ENCODE measurements at regions of chr17 and their contacts with region 1.

Region 1: GRCh38 chr17:41548844-41549595 is 20.9 kb upstream of the KRT19 start:
- DNase-seq: peak; percentile 92
- H3K4me3 ChIP-seq: peak overlapping the region; percentile 21 to 25; a peak in 2 of 4 replicates
- H3K27ac ChIP-seq: peak overlapping the region; percentile 85 to 86
- H3K4me1 ChIP-seq: peaks cover 17 to 30% of the 10 kb centered on the region in 2 experiments; a peak in 3 of 4 replicates
- H3K27me3 ChIP-seq: no peaks in the 10 kb centered on the region
- CTCF ChIP-seq: peak; percentile 94
- EP300 ChIP-seq: peak in 1 of 2 experiments; percentile 6; a peak in 2 of 4 replicates
- RAD21 ChIP-seq: peak; percentile 92

Region 2: DNA sequence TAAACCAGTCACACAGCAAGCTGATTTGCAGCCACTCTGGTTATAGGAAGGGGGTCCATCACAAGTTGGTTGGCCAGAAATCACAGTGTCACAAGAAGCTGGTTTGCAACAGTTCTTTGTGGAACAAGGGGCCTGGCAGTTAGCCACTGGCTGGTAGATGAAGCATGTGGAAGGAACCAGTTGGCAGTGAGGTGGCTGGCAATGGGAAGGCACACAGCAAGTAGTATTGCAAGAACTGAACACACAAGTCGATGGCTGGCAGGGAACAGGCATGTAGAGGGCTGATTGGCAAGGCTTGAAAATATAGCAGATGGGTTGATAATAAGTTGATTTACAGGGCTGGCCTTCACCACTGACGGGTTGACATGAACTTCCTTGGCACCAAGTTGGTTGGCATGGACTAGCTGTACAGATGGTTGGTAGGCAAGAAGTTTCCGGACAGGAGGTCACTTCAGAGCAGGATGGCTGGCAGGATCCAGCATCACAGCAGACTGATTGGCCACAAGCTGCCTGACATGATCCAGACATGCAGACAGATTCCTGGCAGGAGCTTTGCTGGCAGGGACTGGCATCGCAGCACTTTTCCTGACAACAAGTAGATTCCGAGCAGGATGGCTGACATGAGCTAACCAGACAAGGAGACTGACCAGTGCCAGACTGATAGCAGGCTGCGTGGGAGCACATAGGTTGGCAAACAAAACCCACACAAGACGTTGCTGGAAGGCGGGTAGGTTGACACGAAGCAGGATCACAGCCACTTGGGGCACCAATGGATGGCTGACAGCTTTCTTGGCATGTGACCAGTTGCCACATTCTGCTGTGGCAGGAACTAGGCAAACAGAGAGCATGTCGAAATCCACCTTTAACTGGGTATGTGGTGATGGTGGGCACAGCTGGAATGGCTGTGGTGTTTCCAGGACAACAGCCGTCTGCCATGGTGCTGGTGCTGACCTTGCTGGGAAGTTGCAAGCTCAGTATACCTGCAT is 246.8 kb before region 1 on chr17 and contains the start of gene KRTAP29-1:
- CTCF ChIA-PET with region 1: interaction called, 17 read pairs
- POLR2A ChIA-PET with region 1: no interaction called
- DNase-seq: no peak
- H3K4me3 ChIP-seq: no peak within 1 kb of the TSS
- H3K27ac ChIP-seq: no peak within 1 kb of the TSS
- H3K4me1 ChIP-seq: peaks cover 0 to 12% of the 10 kb centered on the region in 2 experiments; a peak in 1 of 4 replicates
- H3K27me3 ChIP-seq: peaks cover 55% of the 10 kb centered on the region; the same call in 1 of the 2 replicates
- CTCF ChIP-seq: no peak
- EP300 ChIP-seq: no peak
- RAD21 ChIP-seq: no peak
- polyA plus RNA-seq, gene KRTAP29-1: not detected in 2 replicates

Region 3: DNA sequence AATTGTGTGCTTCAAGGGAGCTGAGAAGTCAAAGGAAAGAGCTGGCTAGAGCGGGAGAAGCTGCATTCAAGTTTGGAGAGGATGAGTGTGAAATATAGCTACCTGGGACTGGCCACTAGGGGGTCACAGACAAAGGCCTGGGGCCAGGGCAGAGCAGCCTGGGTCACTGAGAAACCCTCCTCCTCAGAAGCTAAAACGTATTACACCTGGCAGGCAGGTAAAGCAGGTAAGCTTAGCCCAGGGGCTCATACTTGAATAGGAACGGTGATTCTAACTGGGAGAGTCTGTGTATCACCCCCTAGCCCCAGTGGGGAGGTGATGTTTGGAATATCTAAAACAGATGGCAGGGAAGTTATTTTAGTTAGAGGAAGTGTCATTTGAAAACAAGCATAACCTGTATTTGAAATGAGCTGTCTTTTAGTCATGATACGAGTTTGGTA is 131.4 kb before region 1 on chr17:
- CTCF ChIA-PET with region 1: interaction called, 11 read pairs
- POLR2A ChIA-PET with region 1: no interaction called
- DNase-seq: peak; percentile 36
- H3K4me3 ChIP-seq: no peak overlapping the region
- H3K27ac ChIP-seq: 0 out of 4 replicates have a peak overlapping the region, but pooled peaks of 1 of the 2 experiments have one; percentile 19
- H3K4me1 ChIP-seq: peaks cover 0 to 47% of the 10 kb centered on the region in 2 experiments; a peak in 3 of 4 replicates
- H3K27me3 ChIP-seq: no peaks in the 10 kb centered on the region
- CTCF ChIP-seq: peak; percentile 52
- EP300 ChIP-seq: no peak
- RAD21 ChIP-seq: peak; percentile 10; the same call in 1 of the 2 replicates

Region 4: DNA sequence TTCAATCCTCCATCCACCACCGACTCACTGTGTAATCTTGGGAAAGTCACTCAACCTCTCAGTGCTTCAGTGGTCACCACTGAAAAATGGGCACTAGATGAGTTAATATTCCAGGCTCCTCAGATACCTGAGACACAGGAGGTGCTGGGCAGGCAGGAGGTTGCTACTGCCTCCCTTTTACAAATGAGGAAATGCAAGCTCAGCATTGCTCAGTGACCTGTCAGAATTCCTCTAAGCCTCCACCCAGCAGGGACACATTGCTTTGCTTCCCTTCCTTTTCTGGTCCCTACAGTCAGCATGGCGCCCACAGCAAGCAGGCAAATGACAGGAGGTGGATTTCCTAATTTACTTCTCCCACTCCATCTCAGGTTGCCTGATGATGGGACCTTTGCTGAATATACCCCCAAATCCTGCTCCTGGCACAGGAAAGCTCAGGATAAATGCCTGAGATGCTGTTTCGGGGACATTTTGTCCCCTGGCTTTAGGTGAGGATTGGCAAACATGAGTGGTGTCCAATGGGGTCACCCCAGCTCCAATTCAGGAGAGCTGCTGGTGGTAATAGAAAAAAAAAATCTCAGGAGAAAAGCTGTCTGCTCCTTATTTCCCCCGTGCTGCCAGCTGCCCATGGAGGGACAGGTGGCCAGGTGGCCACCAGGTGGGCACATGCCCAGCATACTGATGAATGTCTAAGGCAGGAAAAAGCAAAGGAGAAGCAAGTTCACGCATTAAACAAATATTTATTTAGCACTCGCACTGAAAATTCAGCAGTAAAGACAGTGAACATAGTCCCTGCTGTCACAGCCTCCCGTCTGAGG is 38.6 kb before region 1 on chr17:
- CTCF ChIA-PET with region 1: interaction called, 48 read pairs
- POLR2A ChIA-PET with region 1: no interaction called
- DNase-seq: no peak
- H3K4me3 ChIP-seq: no peak overlapping the region
- H3K27ac ChIP-seq: no peak overlapping the region
- H3K4me1 ChIP-seq: peaks cover 0 to 3% of the 10 kb centered on the region in 2 experiments; a peak in 1 of 4 replicates
- H3K27me3 ChIP-seq: no peaks in the 10 kb centered on the region
- CTCF ChIP-seq: no peak
- EP300 ChIP-seq: no peak
- RAD21 ChIP-seq: no peak

Region 5: GRCh38 chr17:41579484-41580243 is 30.6 kb after region 1 on chr17:
- CTCF ChIA-PET with region 1: interaction called, 47 read pairs
- POLR2A ChIA-PET with region 1: no interaction called
- DNase-seq: peak; percentile 90
- H3K4me3 ChIP-seq: no peak overlapping the region
- H3K27ac ChIP-seq: no peak overlapping the region
- H3K4me1 ChIP-seq: peaks cover 0 to 3% of the 10 kb centered on the region in 2 experiments; a peak in 1 of 4 replicates
- H3K27me3 ChIP-seq: no peaks in the 10 kb centered on the region; the same call in 1 of the 2 replicates
- CTCF ChIP-seq: peak; percentile 62
- EP300 ChIP-seq: no peak
- RAD21 ChIP-seq: peak; percentile 75

Region 6: DNA sequence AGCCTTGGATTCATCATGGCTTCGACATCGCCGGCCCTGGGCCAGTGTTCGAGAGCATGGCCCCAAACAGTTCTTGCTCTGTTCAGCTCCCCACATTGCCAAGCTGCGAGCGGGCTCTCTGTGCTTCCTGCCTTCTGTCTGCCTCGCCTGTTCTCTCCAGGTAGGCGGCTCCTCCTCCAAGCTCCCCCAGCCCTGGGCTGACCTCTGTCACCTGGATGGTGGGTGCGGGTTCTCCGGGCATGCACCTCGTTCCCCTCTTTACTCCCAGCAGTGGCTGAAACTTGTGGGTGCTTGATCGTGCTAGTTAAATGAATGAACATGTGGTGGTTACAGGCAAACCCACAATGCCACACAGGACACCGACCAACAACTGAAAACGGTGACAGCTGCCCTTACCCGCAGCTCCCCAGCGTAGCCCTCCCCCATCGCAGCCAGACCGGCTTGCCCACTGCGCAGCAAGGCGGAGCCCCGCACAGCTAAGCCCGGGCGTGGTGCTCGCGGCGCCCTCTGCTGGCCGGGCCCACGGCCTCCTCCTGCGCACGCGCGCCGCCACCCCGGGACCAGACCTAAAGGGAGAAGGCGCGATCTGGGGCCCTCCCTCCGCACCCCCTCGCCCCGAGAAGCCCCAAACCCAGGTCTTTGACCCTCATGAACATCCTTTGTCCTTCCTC is 116.7 kb after region 1 on chr17:
- CTCF ChIA-PET with region 1: interaction called, 534 read pairs
- POLR2A ChIA-PET with region 1: interaction called, 7 read pairs
- DNase-seq: peak; percentile 96
- H3K4me3 ChIP-seq: peak overlapping the region; percentile 44 to 58
- H3K27ac ChIP-seq: peak overlapping the region; percentile 49 to 77
- H3K4me1 ChIP-seq: peaks cover 4 to 14% of the 10 kb centered on the region in 2 experiments; a peak in 2 of 4 replicates
- H3K27me3 ChIP-seq: no peaks in the 10 kb centered on the region; the same call in 1 of the 2 replicates
- CTCF ChIP-seq: peak; percentile 89
- EP300 ChIP-seq: no peak
- RAD21 ChIP-seq: peak; percentile 29; the same call in 1 of the 2 replicates

Region 7: GRCh38 chr17:41844971-41845370 is 296.0 kb after region 1 on chr17:
- CTCF ChIA-PET with region 1: no interaction called
- POLR2A ChIA-PET with region 1: no interaction called
- DNase-seq: no peak
- H3K4me3 ChIP-seq: no peak overlapping the region
- H3K27ac ChIP-seq: no peak overlapping the region
- H3K4me1 ChIP-seq: no peaks in the 10 kb centered on the region
- H3K27me3 ChIP-seq: no peaks in the 10 kb centered on the region
- CTCF ChIP-seq: no peak
- EP300 ChIP-seq: no peak
- RAD21 ChIP-seq: no peak

Region 8: DNA sequence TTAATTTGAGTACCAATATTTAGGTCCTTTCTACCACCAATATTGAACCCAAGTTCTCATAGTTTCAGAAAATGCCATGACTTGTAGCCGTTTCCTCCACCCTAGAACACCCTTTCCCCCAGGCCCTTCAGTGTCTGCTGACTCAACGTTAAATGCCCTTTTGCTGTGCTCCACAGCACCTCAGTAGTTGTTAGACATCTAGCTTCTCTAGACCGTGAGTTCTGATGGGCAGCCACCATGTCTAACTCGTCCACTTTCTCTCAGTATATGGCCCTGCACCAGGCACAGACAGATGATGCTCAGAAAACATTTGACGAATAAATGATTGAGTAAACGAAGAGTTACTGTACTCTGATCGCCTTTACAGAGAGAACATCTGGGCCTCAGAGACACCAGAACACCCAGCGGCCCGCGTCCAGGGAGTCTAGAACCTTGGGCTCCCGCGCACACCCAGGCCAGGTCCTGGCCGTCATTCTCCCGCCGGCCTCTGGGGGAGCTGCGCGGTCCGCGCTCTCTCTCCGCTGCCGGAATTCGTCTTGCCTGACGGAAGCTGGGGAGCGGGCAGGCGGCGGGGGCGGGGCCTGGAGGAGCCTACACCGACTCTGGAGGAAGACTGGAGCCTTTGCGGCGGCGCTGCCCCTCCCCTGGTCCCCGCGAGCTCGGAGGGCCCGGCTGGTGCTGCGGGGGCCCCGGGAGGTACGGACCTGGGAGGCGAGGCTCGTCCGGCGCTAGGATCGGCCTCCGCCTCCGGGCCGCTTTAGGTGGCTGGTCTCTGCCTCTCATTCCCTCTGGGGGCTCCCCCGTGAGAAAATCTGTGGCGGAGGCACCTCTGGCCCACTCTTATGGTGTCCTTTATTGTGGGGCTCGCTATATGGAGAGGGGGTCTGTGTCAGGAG is 470.7 kb after region 1 on chr17 and contains the start of gene NKIRAS2:
- CTCF ChIA-PET with region 1: no interaction called
- POLR2A ChIA-PET with region 1: no interaction called
- DNase-seq: peak; percentile 96
- H3K4me3 ChIP-seq: peak within 1 kb of the TSS; percentile 91 to 92
- H3K27ac ChIP-seq: peak within 1 kb of the TSS; percentile 73 to 81; a peak in 3 of 4 replicates
- H3K4me1 ChIP-seq: peaks cover 9 to 25% of the 10 kb centered on the region in 2 experiments; a peak in 3 of 4 replicates
- H3K27me3 ChIP-seq: no peaks in the 10 kb centered on the region
- CTCF ChIP-seq: peak; percentile 82
- EP300 ChIP-seq: peak in 1 of 2 experiments; percentile 19; a peak in 1 of 4 replicates
- RAD21 ChIP-seq: no peak
- polyA plus RNA-seq, gene NKIRAS2: 89.8 and 91.8 TPM in 2 replicates

Measured in SK-N-SH (cell line).